ENCODE measurements at regions of chr1 and their contacts with region 1.

Region 1: DNA sequence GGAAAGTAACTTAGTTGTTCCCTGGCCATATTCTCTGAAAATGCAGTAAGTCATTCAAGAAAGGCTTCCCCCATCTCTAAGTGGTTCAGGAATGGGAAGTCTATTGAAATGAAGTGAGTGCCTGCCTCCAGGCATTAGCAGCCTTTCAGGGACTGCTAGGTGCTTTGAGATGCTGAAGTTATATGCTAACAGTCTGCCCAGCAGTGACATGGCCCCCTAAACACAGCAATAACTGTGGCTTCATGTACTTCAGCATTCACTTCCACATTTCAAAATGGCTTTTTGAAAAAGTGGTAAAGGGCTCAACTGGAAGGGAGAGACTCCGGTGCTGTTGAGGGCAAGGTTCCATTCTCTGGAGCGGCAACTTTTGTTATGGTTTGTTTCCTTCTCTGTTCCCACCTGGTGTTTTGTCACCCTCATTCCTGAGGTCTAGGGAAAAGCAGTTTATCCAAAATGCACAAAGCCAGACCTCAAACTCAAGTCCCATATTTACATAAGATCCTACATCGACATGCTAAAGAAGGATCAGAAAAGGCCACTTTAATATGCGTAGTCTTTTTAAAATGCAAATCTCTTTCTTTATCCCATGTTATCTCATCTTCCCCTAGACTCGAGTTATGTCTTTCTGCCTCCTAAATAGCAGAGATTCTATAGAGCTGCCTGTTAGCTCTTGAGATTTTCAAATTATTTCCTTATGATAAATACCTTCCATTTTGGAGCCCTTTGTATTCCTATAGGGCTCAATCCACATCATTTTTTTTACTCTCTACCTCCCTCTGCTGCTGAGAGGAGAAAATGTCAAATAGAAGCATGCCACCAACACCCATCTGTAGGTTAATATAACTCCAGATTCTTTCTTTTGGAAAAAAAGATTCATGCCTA is 34.2 kb upstream of the LRRC8C start:
- DNase-seq: peak; percentile 70 to 97
- H3K4me3 ChIP-seq: no peak overlapping the region
- H3K4me1 ChIP-seq: peaks cover 51% of the 10 kb centered on the region
- H3K27me3 ChIP-seq: no peaks in the 10 kb centered on the region

Region 2: GRCh38 chr1:89524369-89525168 is 74.1 kb before region 1 on chr1 and contains the start of gene LRRC8B:
- in situ Hi-C with region 1: loop called (anchors 5 kb)
- DNase-seq: peak; percentile 89 to 95
- H3K4me3 ChIP-seq: peak within 1 kb of the TSS; percentile 86
- H3K4me1 ChIP-seq: peaks cover 44% of the 10 kb centered on the region
- H3K27me3 ChIP-seq: no peaks in the 10 kb centered on the region

Measured in HAP-1 (cell line).